ENCODE measurements at regions of chr16 and their contacts with region 1.

Region 1: DNA sequence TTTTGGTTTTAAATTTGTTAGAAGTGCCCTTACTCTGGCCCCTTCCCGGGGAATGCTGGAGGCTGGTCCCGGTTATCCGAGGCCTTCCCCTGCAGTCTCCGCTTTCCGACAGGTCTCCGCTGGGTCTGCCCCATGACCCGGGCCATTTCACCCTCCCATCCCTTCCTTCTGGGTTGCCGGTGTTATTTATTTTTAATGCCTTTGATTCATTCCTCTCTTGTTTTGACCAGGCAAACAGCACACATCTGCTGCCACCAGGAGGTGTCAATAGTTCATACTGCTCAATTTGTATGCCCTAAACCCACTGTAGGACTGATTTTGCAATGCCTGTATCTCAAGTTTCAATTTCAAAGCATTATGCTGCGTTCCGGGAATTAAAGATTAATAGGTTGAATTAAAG is 113.2 kb upstream of the IRX5 start:
- DNase-seq: peak; percentile 59
- H3K4me3 ChIP-seq: no peak overlapping the region
- H3K27ac ChIP-seq: no peak overlapping the region
- H3K4me1 ChIP-seq: peaks cover 2% of the 10 kb centered on the region
- H3K27me3 ChIP-seq: no peaks in the 10 kb centered on the region
- CTCF ChIP-seq: peak; percentile 56 to 83

Region 2: DNA sequence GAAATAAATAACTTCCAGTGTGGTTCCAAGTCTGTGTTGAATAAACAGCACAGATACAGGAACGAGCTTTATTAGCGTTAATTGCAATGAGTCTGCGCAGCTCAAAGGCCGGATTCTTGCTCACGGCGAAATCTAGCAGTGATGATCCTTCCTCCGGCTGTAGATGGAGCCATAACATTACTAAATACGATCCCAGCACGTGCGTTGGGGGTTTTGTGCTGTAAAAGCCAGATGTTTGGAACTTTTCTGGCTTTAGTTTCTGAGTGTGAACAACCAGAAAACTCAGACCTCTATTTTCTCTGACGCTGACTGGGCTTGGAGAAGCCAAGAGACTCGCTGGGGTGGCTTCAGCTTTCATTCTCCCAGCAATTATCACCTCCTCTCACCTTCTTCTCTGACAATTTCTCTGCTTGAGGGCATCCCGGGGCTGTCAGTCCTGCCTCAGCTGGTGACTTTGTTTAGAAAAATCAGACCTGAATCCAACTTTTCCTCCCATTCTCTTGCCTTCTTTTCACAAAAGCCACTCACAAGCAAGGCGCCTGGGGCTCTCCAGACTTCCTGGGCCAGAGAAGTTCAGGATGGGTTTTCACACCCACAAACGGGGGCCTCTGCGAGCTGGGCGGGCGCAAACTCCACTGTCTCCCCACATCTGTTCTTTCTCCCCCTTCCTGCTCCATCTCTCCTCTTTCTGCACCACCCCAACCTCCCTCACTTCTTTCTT is 1267.3 kb before region 1 on chr16:
- CTCF ChIA-PET with region 1: interaction called, 3 read pairs
- dilution Hi-C with region 1: no loop called
- in situ Hi-C with region 1: no loop called
- intact Hi-C with region 1: loop called (anchors 10 kb)
- DNase-seq: peak; percentile 60
- H3K4me3 ChIP-seq: no peak overlapping the region
- H3K27ac ChIP-seq: no peak overlapping the region
- H3K4me1 ChIP-seq: no peaks in the 10 kb centered on the region
- H3K27me3 ChIP-seq: no peaks in the 10 kb centered on the region
- CTCF ChIP-seq: peak; percentile 72 to 76

Region 3: DNA sequence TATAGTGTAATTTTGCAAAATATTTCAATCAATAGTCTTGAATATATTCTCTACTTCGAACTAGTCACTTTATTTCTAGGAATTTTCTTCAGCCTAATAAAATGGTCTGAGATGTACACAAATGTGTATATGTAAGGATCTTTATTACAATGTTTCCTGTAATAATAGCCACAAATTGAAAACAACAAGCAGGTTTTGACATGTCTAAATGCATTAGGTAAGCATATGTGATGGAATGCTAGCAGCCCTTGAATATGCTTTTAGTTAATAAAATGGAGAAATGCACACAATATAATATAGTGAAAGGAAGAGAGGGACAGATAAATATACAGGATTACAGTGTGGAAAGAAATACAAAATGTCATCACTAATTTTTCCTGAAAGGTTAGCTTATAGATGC is 83.3 kb before region 1 on chr16:
- CTCF ChIA-PET with region 1: no interaction called
- dilution Hi-C with region 1: no loop called
- in situ Hi-C with region 1: no loop called
- intact Hi-C with region 1: no loop called
- DNase-seq: peak; percentile 34
- H3K4me3 ChIP-seq: no peak overlapping the region
- H3K27ac ChIP-seq: no peak overlapping the region
- H3K4me1 ChIP-seq: no peaks in the 10 kb centered on the region
- H3K27me3 ChIP-seq: no peaks in the 10 kb centered on the region
- CTCF ChIP-seq: no peak

Region 4: DNA sequence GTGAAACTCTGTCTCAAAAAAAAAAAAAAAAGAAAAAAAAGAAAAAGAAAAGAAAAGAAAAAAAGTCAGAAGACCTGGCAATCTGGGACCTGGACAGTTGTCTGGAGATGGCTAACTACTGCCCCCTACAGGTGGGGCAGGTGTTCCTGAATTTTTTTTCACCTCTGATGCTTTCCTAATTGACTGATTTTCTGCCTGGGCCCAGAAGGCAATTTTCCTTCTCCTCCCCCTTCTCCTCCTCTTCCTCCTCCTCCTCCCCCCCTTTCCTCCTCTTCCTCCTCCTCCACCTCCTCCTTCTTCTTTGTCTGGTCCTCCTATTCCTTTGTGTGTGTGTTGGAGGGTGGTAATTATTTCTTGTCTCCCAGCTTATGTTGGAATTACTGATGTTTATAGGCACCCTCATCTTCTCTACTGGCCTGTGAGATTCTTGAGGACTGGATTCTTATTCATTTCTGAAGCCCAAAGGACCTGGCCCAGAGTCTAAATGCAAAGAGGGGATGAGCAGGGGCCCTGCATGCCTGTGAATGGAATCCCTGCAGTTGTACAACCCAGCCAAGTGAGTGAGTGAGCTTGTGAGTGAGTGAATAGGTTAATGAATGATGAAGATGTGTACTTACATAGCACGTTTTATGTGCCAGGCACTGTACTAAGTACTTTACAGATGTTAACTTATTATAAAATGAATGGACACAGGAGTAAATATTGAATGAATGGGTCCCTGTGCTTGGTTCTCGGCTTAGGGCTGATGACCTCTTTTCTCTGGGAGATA is 140.1 kb after region 1 on chr16:
- CTCF ChIA-PET with region 1: no interaction called
- dilution Hi-C with region 1: no loop called
- in situ Hi-C with region 1: no loop called
- intact Hi-C with region 1: loop called (anchors 1 kb)
- DNase-seq: peak; percentile 43
- H3K4me3 ChIP-seq: no peak overlapping the region
- H3K27ac ChIP-seq: no peak overlapping the region
- H3K4me1 ChIP-seq: no peaks in the 10 kb centered on the region
- H3K27me3 ChIP-seq: no peaks in the 10 kb centered on the region
- CTCF ChIP-seq: peak; percentile 68 to 82

Region 5: GRCh38 chr16:55052741-55053415 is 235.4 kb after region 1 on chr16:
- CTCF ChIA-PET with region 1: no interaction called
- dilution Hi-C with region 1: no loop called
- in situ Hi-C with region 1: no loop called
- intact Hi-C with region 1: no loop called
- DNase-seq: no peak
- H3K4me3 ChIP-seq: no peak overlapping the region
- H3K27ac ChIP-seq: no peak overlapping the region
- H3K4me1 ChIP-seq: peaks cover 2% of the 10 kb centered on the region
- H3K27me3 ChIP-seq: peaks cover 13% of the 10 kb centered on the region
- CTCF ChIP-seq: no peak